ENCODE measurements at regions of chr3 and their contacts with region 1.

Region 1: GRCh38 chr3:126259411-126260391 is 79.3 kb upstream of the ALDH1L1 start:
- DNase-seq: peak in 41 of 42 donors; percentile 55 to 90 (median 78)

Region 2: DNA sequence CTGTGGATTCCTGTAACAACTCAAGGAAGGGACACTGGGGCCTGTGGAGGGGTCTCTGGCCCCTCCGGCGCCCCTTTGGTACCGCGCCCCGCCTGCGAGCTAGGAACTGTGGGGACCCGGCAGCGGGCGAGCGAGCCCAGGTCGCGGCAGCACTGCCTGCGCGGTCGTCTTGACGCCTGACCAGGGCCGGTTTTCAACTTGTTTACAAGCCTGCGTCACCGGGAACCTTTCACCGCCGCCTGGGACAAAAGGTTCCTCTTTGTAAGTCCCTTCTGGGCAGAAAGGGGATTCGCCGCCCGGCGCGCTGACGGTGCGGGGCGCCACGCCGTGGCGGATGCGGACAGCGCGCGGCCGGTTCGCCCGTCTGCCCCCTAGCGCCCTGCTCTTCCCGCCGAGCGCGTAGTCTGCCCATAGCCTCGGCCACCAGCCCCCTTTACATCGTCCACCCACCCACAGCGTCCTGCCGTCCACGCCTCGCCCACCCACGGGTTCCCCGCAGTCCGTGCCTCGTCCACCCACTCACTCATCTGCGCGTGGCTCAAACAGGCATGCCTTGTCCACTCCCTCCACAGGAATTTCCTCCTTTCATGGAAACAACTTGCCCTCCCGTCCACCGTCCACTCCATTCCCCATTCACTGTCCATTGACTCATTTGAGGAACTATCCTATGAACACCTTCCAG is 129.6 kb after region 1 on chr3:
- intact Hi-C with region 1: loop called (anchors 2 kb)
- DNase-seq: peak; percentile 75 to 95 (median 89)

Measured in head of caudate nucleus (tissue), 42 donors.